PC-3 (cell line): ENCODE measurements at regions of chr4 and their contacts with region 1.

Region 1: GRCh38 chr4:2862528-2862927 is 18.9 kb downstream of the ADD1 start:
- DNase-seq: peak; percentile 45
- ATAC-seq: peak; percentile 97
- H3K4me3 ChIP-seq: no peak overlapping the region
- H3K27ac ChIP-seq: no peak overlapping the region
- H3K4me1 ChIP-seq: peaks cover 12% of the 10 kb centered on the region
- H3K27me3 ChIP-seq: no peaks in the 10 kb centered on the region
- CTCF ChIP-seq: no peak

Region 2: GRCh38 chr4:2741626-2742025 is 120.9 kb before region 1 on chr4:
- CTCF ChIA-PET with region 1: no interaction called
- POLR2A ChIA-PET with region 1: interaction called, 12 read pairs
- intact Hi-C with region 1: no loop called
- DNase-seq: no peak
- ATAC-seq: no peak
- H3K4me3 ChIP-seq: no peak overlapping the region
- H3K27ac ChIP-seq: no peak overlapping the region
- H3K4me1 ChIP-seq: peaks cover 12% of the 10 kb centered on the region
- H3K27me3 ChIP-seq: no peaks in the 10 kb centered on the region
- CTCF ChIP-seq: no peak

Region 3: DNA sequence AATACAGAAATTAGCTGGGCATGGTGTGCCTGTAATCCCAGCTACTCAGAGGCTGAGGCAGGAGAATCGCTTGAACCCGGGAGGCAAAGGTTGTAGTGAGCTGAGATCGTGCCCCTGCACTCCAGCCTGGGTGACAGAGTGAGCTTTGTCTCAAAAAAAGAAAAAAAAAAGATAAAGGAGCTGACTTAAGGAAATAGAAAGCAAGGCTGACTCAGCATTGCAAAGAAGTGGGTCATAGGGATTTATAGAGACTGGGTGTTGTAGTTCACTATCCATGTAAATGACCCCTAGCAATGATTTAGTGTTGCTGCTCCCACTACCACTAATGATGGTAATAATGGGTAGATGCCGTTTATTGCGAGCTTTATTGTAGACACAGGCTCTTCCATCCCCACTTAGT is 28.8 kb after region 1 on chr4:
- CTCF ChIA-PET with region 1: no interaction called
- POLR2A ChIA-PET with region 1: no interaction called
- intact Hi-C with region 1: loop called (anchors 1 kb)
- DNase-seq: peak; percentile 40
- ATAC-seq: peak; percentile 55
- H3K4me3 ChIP-seq: no peak overlapping the region
- H3K27ac ChIP-seq: 0 out of 2 replicates have a peak overlapping the region, but pooled peaks have one; percentile 5
- H3K4me1 ChIP-seq: peaks cover 14% of the 10 kb centered on the region; the same call in 1 of the 2 replicates
- H3K27me3 ChIP-seq: no peaks in the 10 kb centered on the region
- CTCF ChIP-seq: no peak

Region 4: GRCh38 chr4:2914246-2914645 is 51.7 kb after region 1 on chr4:
- CTCF ChIA-PET with region 1: no interaction called
- POLR2A ChIA-PET with region 1: no interaction called
- intact Hi-C with region 1: no loop called
- DNase-seq: no peak
- ATAC-seq: no peak
- H3K4me3 ChIP-seq: no peak overlapping the region
- H3K27ac ChIP-seq: no peak overlapping the region
- H3K4me1 ChIP-seq: no peaks in the 10 kb centered on the region
- H3K27me3 ChIP-seq: no peaks in the 10 kb centered on the region
- CTCF ChIP-seq: no peak

Region 5: GRCh38 chr4:3047464-3048286 is 185.1 kb after region 1 on chr4:
- CTCF ChIA-PET with region 1: no interaction called
- POLR2A ChIA-PET with region 1: no interaction called
- intact Hi-C with region 1: no loop called
- DNase-seq: peak; percentile 64
- ATAC-seq: peak; percentile 91
- H3K4me3 ChIP-seq: no peak overlapping the region
- H3K27ac ChIP-seq: no peak overlapping the region
- H3K4me1 ChIP-seq: peaks cover 3% of the 10 kb centered on the region
- H3K27me3 ChIP-seq: no peaks in the 10 kb centered on the region
- CTCF ChIP-seq: peak; percentile 67